ENCODE measurements at regions of chr11 and their contacts with region 1.

Region 1: DNA sequence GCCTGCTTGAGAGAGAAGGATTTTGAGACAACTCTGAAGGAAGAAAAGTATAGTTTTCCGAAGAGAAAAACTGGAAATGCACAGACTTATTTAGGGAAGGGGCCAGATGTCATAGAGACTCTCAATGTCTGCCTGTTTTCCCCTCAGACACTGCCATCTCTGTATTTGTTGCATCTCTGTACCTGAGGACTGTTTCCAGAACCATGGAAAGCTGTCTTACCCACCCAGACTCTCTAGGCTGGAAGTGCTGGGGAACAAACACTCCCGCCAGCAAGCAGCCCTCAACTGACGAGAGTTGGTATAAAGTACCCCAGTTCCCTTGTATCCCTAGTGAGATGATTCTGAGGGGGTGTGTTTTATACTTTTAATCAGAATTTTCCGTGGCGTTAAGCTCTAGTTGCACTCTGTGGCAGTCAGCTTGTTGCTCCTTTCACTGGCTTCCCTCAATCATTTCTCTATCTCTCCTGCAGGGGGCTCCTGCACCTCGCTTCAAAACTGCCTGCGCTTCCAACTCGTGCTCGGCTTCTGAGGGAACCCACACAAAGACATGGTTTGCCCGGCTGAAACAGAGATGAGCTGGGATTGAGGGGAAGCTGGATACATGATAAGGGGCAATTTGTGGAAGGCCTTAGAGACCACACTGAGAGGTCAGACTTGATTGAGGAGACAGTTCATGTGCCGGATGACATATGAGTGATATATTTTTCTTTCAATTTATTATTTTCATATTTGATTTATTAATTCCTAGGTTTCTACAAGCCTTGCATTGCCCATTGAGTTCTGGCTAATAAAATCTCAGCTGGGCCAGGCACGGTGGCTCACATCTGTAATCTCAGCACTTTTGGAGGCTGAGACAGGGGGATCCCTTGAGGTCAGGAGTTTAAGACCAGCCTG is 36.9 kb upstream of the CLPB start:
- DNase-seq: peak; percentile 67 to 87
- H3K4me3 ChIP-seq: no peak overlapping the region
- H3K27ac ChIP-seq: no peak overlapping the region
- H3K4me1 ChIP-seq: peaks cover 0 to 9% (median 3%) of the 10 kb centered on the region in 4 donors
- H3K27me3 ChIP-seq: peaks cover 0 to 66% (median 11%) of the 10 kb centered on the region in 3 donors
- CTCF ChIP-seq: peak in 5 of 7 experiments; percentile 65 to 83 (median 72)
- EP300 ChIP-seq: no peak
- POLR2A ChIP-seq: no peak

Region 2: DNA sequence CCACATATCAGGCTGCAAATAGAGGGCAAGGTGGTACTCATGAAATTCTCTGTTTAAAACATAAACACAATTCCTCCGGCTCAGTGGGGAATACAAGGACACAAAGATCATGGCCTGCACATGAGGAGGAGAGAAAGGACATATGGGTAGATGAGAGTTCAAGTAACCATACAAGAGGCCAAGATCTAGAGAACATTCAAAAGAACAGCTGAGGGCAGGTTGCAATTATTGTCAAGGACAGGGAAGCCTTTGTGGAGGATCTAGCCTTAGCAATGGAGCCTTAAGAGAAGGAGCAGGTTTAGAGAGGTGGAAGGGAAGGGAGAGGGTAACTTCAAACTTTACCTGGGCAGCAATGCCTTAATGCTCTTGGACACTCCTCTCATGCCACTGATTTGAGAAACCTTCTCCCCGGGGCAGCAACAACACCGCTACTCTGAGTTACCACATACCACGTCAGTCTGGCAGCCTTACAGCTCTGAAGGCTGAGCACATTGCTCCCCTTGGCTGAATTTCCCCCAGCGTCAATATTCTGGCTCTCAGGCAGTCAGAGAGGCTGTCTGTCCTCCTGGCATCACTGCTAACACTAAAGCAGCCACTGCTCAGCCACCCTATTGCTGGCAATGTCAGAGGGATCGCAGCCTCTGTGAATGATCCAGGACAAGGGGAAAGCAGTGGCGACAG is 92.4 kb before region 1 on chr11:
- intact Hi-C with region 1: no loop called
- DNase-seq: peak; percentile 28 to 52
- H3K4me3 ChIP-seq: no peak overlapping the region
- H3K27ac ChIP-seq: peak overlapping the region in 2 of 5 donors; percentile 4 to 46
- H3K4me1 ChIP-seq: peaks cover 0 to 26% (median 8%) of the 10 kb centered on the region in 4 donors
- H3K27me3 ChIP-seq: no peaks in the 10 kb centered on the region
- CTCF ChIP-seq: no peak
- EP300 ChIP-seq: no peak
- POLR2A ChIP-seq: no peak

Region 3: DNA sequence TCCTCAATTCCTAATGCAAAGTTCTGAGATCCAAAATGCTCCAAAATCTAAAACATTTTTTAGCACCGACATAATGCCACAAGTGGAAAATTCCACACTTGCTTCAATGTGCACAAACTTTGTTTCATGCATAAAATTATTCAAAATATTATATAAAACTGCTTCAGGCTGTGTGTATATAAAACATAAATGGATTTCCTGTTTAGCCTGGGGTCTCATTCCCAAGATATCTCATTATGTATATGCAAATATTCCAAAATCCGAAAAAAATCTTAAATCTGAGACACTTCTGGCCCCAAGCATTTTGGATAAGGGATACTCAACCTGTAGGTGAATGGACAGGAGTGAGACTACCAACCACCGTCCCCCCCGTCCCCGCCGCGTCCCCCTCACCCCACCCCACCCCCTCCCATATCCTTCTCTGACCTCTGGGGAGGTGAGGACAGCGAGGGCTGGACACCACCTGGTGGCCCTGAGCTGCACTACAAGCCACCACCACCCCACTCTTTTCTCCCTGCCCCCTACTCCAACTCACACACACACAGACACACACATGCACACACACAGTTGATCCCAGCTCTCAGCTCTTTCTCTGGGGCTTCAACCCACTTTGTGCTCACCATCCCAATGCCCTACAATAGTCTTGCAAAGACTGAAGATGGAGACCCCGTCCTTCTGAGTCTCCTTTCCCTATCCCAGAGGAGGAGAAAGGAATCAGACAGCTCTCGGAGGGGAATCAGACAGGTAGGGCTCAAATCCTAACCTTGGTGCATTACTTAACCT is 102.0 kb after region 1 on chr11:
- intact Hi-C with region 1: loop called (anchors 5 kb)
- DNase-seq: peak in 1 of 2 donors; percentile 62
- H3K4me3 ChIP-seq: no peak overlapping the region
- H3K27ac ChIP-seq: no peak overlapping the region
- H3K4me1 ChIP-seq: peaks cover 0 to 8% (median 0%) of the 10 kb centered on the region in 4 donors
- H3K27me3 ChIP-seq: peaks cover 0 to 42% (median 3%) of the 10 kb centered on the region in 3 donors
- CTCF ChIP-seq: peak in 5 of 7 experiments; percentile 54 to 66 (median 57)
- EP300 ChIP-seq: no peak
- POLR2A ChIP-seq: no peak

Region 4: DNA sequence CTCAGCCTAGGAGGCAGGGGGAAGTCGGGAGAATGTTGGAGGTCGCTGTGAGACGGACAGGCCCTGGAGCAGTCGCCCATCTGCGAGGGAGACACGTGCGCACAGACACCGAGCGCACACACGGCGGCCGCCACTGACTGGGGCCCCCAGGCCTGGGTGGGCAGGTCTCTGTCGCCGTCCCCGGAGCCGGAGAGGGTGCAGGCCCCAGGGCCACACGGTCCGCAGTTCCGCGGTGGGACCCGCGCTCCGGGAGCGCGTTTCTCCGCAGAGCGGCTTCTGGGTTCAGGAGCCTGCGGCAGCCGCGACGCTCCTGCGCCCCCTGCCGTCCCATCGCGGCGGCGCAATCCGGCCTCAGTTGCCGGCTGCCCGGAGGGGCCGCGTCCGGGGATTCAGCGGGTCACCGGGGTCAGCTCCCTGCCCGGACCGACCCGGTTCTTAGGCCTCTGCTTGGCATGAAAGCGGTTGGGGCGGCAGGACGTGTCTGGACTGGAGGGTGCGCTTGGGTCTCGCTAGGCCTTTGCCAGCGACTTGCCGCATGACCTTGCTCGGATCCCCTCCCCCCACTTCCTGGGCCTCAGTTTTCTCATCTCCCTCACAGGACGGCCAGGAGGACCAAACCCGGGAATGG is 171.7 kb after region 1 on chr11:
- intact Hi-C with region 1: loop called (anchors 10 kb)
- DNase-seq: peak; percentile 56 to 88
- H3K4me3 ChIP-seq: peak overlapping the region; percentile 57 to 70 (median 64)
- H3K27ac ChIP-seq: peak overlapping the region in 4 of 5 donors; percentile 29 to 68 (median 62)
- H3K4me1 ChIP-seq: peaks cover 17 to 41% (median 29%) of the 10 kb centered on the region in 4 donors
- H3K27me3 ChIP-seq: peaks cover 0 to 48% (median 32%) of the 10 kb centered on the region in 3 donors
- CTCF ChIP-seq: peak in 5 of 7 experiments; percentile 85 to 97 (median 93)
- EP300 ChIP-seq: no peak
- POLR2A ChIP-seq: no peak

Measured in stomach (tissue), 19 donors.